ENCODE measurements at regions of chr1 and their contacts with region 1.

Region 1: GRCh38 chr1:116674011-116674531 is 6.5 kb upstream of the IGSF3 start:
- DNase-seq: no peak
- ATAC-seq: no peak
- H3K4me3 Mint-ChIP-seq: no peak overlapping the region
- H3K27ac Mint-ChIP-seq: no peak overlapping the region
- H3K4me1 Mint-ChIP-seq: peaks cover 2% of the 10 kb centered on the region
- H3K27me3 Mint-ChIP-seq: peaks cover 39% of the 10 kb centered on the region
- CTCF ChIP-seq: no peak

Region 2: GRCh38 chr1:116560704-116561490 is 113.2 kb before region 1 on chr1:
- CTCF ChIA-PET with region 1: no interaction called
- POLR2A ChIA-PET with region 1: no interaction called
- intact Hi-C with region 1: no loop called
- DNase-seq: no peak
- ATAC-seq: no peak
- H3K4me3 Mint-ChIP-seq: no peak overlapping the region
- H3K27ac Mint-ChIP-seq: no peak overlapping the region
- H3K4me1 Mint-ChIP-seq: peaks cover 75% of the 10 kb centered on the region
- H3K27me3 Mint-ChIP-seq: no peaks in the 10 kb centered on the region
- CTCF ChIP-seq: no peak

Region 3: DNA sequence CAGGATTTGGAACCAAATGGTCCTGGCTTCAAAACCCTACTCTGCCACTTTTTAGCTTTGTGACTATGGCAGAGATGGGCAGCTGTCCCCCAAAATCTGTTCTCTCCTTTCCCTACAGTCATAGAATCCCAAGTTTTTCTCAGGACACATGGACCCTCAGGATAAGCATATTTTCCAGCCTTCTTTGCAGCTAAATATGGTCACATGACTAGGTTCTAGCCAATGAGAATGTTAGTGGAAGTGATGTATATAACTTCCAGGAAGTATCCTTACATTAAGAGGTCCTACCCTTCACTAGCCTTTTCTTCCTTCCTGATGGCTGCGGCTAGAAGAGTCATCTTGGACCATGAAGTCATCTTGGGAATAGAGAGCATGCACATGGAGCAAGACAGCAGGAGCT is 12.4 kb before region 1 on chr1:
- CTCF ChIA-PET with region 1: interaction called, 18 read pairs
- POLR2A ChIA-PET with region 1: no interaction called
- intact Hi-C with region 1: no loop called
- DNase-seq: no peak
- ATAC-seq: no peak
- H3K4me3 Mint-ChIP-seq: no peak overlapping the region
- H3K27ac Mint-ChIP-seq: no peak overlapping the region
- H3K4me1 Mint-ChIP-seq: peaks cover 8% of the 10 kb centered on the region
- H3K27me3 Mint-ChIP-seq: peaks cover 33% of the 10 kb centered on the region
- CTCF ChIP-seq: no peak

Region 4: GRCh38 chr1:116693759-116694482 is 19.9 kb after region 1 on chr1:
- CTCF ChIA-PET with region 1: interaction called, 13 read pairs
- POLR2A ChIA-PET with region 1: no interaction called
- intact Hi-C with region 1: no loop called
- DNase-seq: no peak
- ATAC-seq: no peak
- H3K4me3 Mint-ChIP-seq: no peak overlapping the region
- H3K27ac Mint-ChIP-seq: no peak overlapping the region
- H3K4me1 Mint-ChIP-seq: no peaks in the 10 kb centered on the region
- H3K27me3 Mint-ChIP-seq: peaks cover 2% of the 10 kb centered on the region
- CTCF ChIP-seq: no peak

Region 5: GRCh38 chr1:116704278-116704677 is 30.2 kb after region 1 on chr1:
- CTCF ChIA-PET with region 1: interaction called, 16 read pairs
- POLR2A ChIA-PET with region 1: no interaction called
- intact Hi-C with region 1: no loop called
- DNase-seq: no peak
- ATAC-seq: no peak
- H3K4me3 Mint-ChIP-seq: no peak overlapping the region
- H3K27ac Mint-ChIP-seq: no peak overlapping the region
- H3K4me1 Mint-ChIP-seq: no peaks in the 10 kb centered on the region
- H3K27me3 Mint-ChIP-seq: peaks cover 4% of the 10 kb centered on the region
- CTCF ChIP-seq: no peak

Region 6: GRCh38 chr1:116740746-116741145 is 66.7 kb after region 1 on chr1:
- CTCF ChIA-PET with region 1: no interaction called
- POLR2A ChIA-PET with region 1: no interaction called
- intact Hi-C with region 1: no loop called
- DNase-seq: no peak
- ATAC-seq: no peak
- H3K4me3 Mint-ChIP-seq: no peak overlapping the region
- H3K27ac Mint-ChIP-seq: peak overlapping the region; percentile 100
- H3K4me1 Mint-ChIP-seq: peaks cover 56% of the 10 kb centered on the region
- H3K27me3 Mint-ChIP-seq: no peaks in the 10 kb centered on the region
- CTCF ChIP-seq: no peak

Measured in activated CD8-positive, alpha-beta T cell treated with anti-CD3 and anti-CD28 coated beads for 36 hours (primary cell).